AG04449 (cell line): ENCODE measurements at regions of chrX and their contacts with region 1.

Region 1: DNA sequence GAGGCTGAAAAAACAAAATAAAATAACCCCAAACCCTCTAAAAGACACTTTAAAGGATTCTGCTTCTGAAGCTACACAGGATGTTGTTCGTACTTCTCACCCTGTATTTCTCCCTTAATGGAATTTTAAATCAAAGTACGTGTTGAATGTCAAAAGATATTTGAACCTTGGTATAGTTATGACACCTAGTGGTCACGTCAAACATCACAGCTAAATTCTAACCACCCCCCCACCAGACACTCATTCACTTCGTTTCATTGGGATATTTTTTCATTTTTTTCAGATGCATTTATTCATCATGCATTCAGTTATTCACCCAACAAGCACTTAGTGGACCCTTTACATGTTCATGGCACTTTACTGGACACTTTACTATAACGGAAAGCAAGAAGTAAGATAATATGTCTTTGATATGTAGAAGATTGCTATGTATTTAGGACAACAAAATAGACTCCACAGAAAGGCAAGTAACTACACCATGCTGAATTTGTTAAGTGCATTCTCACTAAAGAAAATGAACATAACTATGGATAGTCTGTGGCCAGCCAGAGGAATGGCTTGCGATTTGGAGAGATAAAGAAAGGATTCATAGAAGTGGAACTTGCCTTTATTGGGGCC is 62.5 kb upstream of the GPR174 start:
- DNase-seq: no peak
- H3K4me3 ChIP-seq: no peak overlapping the region
- CTCF ChIP-seq: peak; percentile 13

Region 2: GRCh38 chrX:78555401-78555980 is 526.5 kb before region 1 on chrX:
- CTCF ChIA-PET with region 1: interaction called, 22 read pairs
- POLR2A ChIA-PET with region 1: no interaction called
- DNase-seq: no peak
- H3K4me3 ChIP-seq: no peak overlapping the region
- CTCF ChIP-seq: no peak